ENCODE measurements at regions of chr15 and their contacts with region 1.

Region 1: DNA sequence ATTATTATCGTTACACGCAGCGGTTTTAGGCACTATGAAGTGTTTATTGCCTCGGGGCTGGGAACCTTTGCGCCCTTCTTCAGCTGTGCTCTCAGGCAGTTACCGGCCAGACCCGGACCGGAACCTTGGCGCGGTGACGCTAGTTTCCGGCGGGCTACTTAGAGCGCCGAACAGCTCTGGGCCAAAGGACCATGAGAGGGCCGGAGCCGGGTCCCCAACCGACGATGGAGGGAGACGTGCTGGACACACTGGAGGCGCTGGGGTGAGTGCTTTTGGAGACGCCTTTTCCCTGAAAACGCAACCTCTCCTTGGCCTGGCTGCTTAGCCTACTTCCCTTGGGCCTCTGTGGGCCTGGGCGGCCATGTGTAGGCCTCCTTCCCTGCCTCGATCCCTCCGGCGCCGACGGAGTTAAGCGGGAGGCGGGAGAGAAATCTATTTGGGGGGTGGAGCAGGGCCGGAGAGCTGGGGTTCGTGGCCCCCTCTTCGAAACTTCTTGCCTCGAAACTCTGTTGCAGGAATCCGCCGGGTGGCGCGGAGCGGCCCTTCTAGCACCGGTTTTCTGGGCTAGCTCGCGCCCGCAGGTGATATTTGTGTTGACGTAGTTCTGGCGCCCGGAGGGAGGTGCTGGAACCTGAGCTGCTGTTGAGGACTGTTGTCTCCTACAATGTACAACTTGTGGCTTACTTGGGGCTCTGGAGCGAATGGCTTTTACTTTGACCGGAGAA is at the start of gene FAM98B:
- DNase-seq: peak; percentile 92
- ATAC-seq: peak; percentile 90
- H3K4me3 Mint-ChIP-seq: peak within 1 kb of the TSS; percentile 97
- H3K27ac Mint-ChIP-seq: peak within 1 kb of the TSS; percentile 91
- H3K4me1 Mint-ChIP-seq: peaks cover 35% of the 10 kb centered on the region
- H3K27me3 Mint-ChIP-seq: peaks cover 2% of the 10 kb centered on the region
- CTCF ChIP-seq: no peak
- total RNA-seq, gene FAM98B: 29.9 and 30.7 TPM in 2 replicates

Region 2: GRCh38 chr15:38072348-38073177 is 381.6 kb before region 1 on chr15:
- CTCF ChIA-PET with region 1: no interaction called
- POLR2A ChIA-PET with region 1: no interaction called
- intact Hi-C with region 1: loop called (anchors 5 kb)
- DNase-seq: peak; percentile 37
- ATAC-seq: peak; percentile 63
- H3K4me3 Mint-ChIP-seq: peak overlapping the region; percentile 86
- H3K27ac Mint-ChIP-seq: peak overlapping the region; percentile 63
- H3K4me1 Mint-ChIP-seq: peaks cover 60% of the 10 kb centered on the region
- H3K27me3 Mint-ChIP-seq: peaks cover 11% of the 10 kb centered on the region
- CTCF ChIP-seq: no peak

Region 3: GRCh38 chr15:38474155-38474757 is 20.1 kb after region 1 on chr15:
- CTCF ChIA-PET with region 1: interaction called, 6 read pairs
- POLR2A ChIA-PET with region 1: interaction called, 3 read pairs
- intact Hi-C with region 1: loop called (anchors 2 kb)
- DNase-seq: no peak
- ATAC-seq: peak; percentile 100
- H3K4me3 Mint-ChIP-seq: no peak overlapping the region
- H3K27ac Mint-ChIP-seq: no peak overlapping the region
- H3K4me1 Mint-ChIP-seq: no peaks in the 10 kb centered on the region
- H3K27me3 Mint-ChIP-seq: no peaks in the 10 kb centered on the region
- CTCF ChIP-seq: no peak

Region 4: DNA sequence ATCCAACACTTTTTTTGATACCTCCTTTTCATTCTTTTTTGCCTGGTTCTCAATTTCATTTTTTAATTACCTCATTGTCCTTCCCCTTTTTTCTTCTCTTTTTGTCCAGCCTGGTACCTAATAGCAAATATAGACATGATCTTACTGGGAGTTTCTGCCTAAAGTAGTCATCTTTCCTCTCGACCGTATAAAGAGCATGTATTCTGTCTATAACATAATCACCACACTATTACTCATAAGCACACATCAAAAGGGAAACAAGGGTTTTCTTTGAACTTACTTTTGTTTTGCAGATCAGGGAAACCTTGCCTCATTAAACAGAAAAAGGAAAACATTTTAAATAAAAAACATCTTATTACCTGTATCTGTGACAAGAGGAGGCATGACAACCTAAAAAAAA is 32.8 kb after region 1 on chr15:
- CTCF ChIA-PET with region 1: no interaction called
- POLR2A ChIA-PET with region 1: no interaction called
- intact Hi-C with region 1: no loop called
- DNase-seq: no peak
- ATAC-seq: no peak
- H3K4me3 Mint-ChIP-seq: no peak overlapping the region
- H3K27ac Mint-ChIP-seq: no peak overlapping the region
- H3K4me1 Mint-ChIP-seq: peaks cover 2% of the 10 kb centered on the region
- H3K27me3 Mint-ChIP-seq: no peaks in the 10 kb centered on the region
- CTCF ChIP-seq: no peak

Region 5: GRCh38 chr15:38576837-38577236 is 122.7 kb after region 1 on chr15:
- CTCF ChIA-PET with region 1: no interaction called
- POLR2A ChIA-PET with region 1: no interaction called
- intact Hi-C with region 1: no loop called
- DNase-seq: no peak
- ATAC-seq: no peak
- H3K4me3 Mint-ChIP-seq: no peak overlapping the region
- H3K27ac Mint-ChIP-seq: no peak overlapping the region
- H3K4me1 Mint-ChIP-seq: no peaks in the 10 kb centered on the region
- H3K27me3 Mint-ChIP-seq: no peaks in the 10 kb centered on the region
- CTCF ChIP-seq: no peak

Region 6: DNA sequence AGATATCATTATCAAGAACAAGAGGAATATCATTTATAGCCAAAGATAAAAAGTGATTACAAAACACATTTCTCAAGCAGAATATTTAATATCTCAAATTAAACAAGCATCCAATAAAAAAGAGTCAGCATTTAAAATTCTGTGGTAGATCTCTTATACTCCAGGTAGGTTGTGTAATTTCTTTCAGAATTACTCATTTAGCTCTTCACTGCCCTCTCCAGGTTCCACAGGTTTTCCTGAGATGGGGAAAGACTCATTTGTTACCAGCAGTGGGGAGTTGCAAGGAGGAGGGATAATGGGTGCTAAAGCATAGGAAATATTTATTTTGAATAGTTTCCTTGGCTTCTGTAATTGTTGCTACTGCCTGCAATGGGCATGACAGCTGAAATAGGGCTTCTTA is 193.6 kb after region 1 on chr15:
- CTCF ChIA-PET with region 1: no interaction called
- POLR2A ChIA-PET with region 1: interaction called, 13 read pairs
- intact Hi-C with region 1: no loop called
- DNase-seq: no peak
- ATAC-seq: no peak
- H3K4me3 Mint-ChIP-seq: no peak overlapping the region
- H3K27ac Mint-ChIP-seq: no peak overlapping the region
- H3K4me1 Mint-ChIP-seq: peaks cover 60% of the 10 kb centered on the region
- H3K27me3 Mint-ChIP-seq: no peaks in the 10 kb centered on the region
- CTCF ChIP-seq: no peak

Measured in activated B cell treated with CpG ODN at 0.5 μM for 24 hours (primary cell).